ENCODE measurements at regions of chr22 and their contacts with region 1.

Region 1: DNA sequence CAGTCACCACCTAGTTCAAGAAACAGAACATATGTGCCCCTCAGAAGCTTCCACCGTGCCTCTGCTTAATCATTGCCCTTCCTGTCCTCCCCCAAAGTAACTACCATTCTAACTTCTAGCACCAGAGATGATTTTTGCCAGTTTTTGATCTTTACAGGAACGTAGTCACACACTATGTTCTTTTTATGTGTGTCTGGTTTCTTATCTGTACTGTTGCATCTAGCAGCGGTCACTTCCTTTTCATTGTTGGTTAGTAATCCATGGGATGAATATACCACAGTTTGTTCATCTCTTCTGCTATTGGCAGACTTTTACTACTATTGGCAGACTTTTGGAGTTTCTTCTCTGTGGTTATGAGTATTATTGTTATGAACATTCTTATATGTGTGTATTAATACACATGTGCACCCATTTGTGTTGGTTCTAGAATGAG is 34.6 kb downstream of the SPECC1L start:
- DNase-seq: no peak
- H3K4me3 Mint-ChIP-seq: peak overlapping the region; percentile 5
- H3K27ac Mint-ChIP-seq: peak overlapping the region; percentile 16
- H3K4me1 Mint-ChIP-seq: peaks cover 37% of the 10 kb centered on the region
- H3K27me3 Mint-ChIP-seq: no peaks in the 10 kb centered on the region

Region 2: GRCh38 chr22:23984430-23984829 is 320.8 kb before region 1 on chr22:
- intact Hi-C with region 1: no loop called
- DNase-seq: peak; percentile 46
- H3K4me3 Mint-ChIP-seq: no peak overlapping the region
- H3K27ac Mint-ChIP-seq: no peak overlapping the region
- H3K4me1 Mint-ChIP-seq: peaks cover 8% of the 10 kb centered on the region
- H3K27me3 Mint-ChIP-seq: peaks cover 5% of the 10 kb centered on the region

Region 3: DNA sequence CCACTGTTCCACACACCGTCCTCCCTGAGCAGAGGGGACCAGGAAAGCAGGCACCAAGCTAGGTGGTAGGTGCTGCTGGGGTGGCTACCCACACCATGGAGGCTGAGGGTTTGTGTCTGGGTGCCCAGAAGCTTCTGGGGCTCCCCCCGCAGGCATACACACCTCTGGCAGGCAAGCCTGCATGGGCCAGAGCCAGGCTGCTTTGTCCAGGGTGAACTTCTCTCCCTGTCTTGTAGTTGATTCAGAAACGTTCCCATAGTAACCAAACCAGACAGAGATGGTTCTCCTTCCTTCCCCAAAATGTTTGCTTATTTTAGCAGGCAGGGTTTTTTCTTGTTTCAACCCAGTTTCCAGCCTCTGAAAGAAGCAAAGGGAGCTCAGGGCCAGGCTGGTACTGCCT is 164.9 kb before region 1 on chr22:
- intact Hi-C with region 1: no loop called
- DNase-seq: no peak
- H3K4me3 Mint-ChIP-seq: no peak overlapping the region
- H3K27ac Mint-ChIP-seq: no peak overlapping the region
- H3K4me1 Mint-ChIP-seq: peaks cover 25% of the 10 kb centered on the region
- H3K27me3 Mint-ChIP-seq: no peaks in the 10 kb centered on the region

Region 4: DNA sequence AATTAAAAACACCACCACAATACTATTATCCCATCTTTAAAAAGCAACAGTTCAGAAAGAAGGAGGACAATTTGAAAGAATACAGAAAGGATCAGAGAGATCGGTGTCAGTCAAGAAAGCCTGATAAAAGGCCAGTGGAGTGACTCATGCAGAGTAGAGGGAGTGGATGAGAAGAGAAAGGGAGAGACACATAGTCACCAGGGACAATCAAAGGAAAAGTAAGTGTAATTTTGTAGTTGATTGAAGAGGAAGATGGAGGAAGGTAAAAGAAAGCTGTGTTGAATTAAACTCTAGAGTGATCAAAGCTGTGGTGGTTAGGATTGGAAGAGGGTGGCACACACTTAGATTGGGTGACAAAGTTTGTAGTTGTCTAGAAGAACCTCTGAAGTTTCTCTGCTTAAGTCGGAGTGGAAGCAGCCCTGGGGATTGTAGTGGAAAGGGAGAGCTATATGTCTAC is 20.5 kb before region 1 on chr22:
- intact Hi-C with region 1: loop called (anchors 1 kb)
- DNase-seq: no peak
- H3K4me3 Mint-ChIP-seq: peak overlapping the region; percentile 11
- H3K27ac Mint-ChIP-seq: peak overlapping the region; percentile 69
- H3K4me1 Mint-ChIP-seq: peaks cover 42% of the 10 kb centered on the region
- H3K27me3 Mint-ChIP-seq: peaks cover 14% of the 10 kb centered on the region

Measured in activated T-helper 2 cell treated with anti-CD3 and anti-CD28 coated beads, Interferon-gamma antibody, Interleukin-2, Interleukin-4, amounts not matched to agents 10 μg/mL and 5 μg/mL and 100 μg/mL, durations not matched to agents 14 hours and 24 hours and 36 hours (primary cell).